Activated CD8-positive, alpha-beta T cell treated with anti-CD3 and anti-CD28 coated beads for 36 hours (primary cell): ENCODE measurements at regions of chrX and their contacts with region 1.

Region 1: DNA sequence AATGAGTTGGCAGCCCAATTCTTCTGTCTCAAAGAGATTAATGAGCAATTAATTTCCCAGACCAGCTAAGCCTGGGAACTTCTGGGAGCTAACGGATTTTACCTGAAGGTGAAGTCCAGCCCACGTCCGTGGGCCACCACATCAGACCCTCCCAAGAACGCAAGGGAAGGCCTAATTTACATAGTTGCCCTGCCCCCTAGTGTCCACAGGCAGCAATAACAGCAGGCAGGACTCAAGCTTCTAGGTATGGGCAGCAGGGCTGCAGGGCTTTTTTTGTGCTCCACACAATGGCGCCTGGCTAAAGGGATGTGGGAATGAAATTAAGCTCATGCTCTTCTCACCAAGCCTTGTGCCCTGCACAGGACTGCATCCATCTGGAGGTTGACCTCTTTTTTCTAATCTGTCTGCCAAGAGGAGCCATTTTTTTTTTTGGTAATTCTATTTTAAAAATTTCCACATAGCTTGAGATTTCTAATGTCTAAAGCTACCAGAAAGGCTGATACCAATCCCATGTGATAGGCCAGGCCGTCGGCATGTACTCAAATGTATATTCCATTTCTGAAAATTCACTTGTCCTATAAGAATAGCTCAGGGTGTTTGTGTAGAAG is 111.9 kb upstream of the TMEM164 start:
- DNase-seq: peak; percentile 59
- ATAC-seq: peak; percentile 74
- H3K4me3 Mint-ChIP-seq: no peak overlapping the region
- H3K27ac Mint-ChIP-seq: no peak overlapping the region
- H3K4me1 Mint-ChIP-seq: no peaks in the 10 kb centered on the region
- H3K27me3 Mint-ChIP-seq: no peaks in the 10 kb centered on the region
- CTCF ChIP-seq: peak; percentile 73

Region 2: DNA sequence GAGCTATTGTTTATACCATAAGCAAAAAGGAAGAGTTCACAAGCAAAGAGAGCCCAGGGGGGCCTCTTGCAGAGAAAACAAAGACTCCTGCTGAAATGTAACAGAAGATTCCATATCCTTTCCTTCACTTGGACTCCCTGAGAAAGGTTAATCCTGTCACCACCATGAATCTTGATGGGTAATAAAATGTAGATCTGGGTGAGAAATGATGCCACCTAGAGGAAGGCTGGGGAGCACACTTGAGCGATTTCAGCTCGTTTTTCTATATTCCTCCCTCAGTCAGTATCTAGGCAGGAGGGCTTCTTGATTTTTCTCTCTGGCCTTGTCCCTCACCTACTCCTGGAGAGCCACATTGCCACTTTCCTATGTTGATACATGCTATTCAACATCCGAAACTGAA is 255.8 kb before region 1 on chrX:
- CTCF ChIA-PET with region 1: interaction called, 12 read pairs
- POLR2A ChIA-PET with region 1: no interaction called
- intact Hi-C with region 1: no loop called
- DNase-seq: peak; percentile 4
- ATAC-seq: peak; percentile 20
- H3K4me3 Mint-ChIP-seq: no peak overlapping the region
- H3K27ac Mint-ChIP-seq: no peak overlapping the region
- H3K4me1 Mint-ChIP-seq: peaks cover 2% of the 10 kb centered on the region
- H3K27me3 Mint-ChIP-seq: no peaks in the 10 kb centered on the region
- CTCF ChIP-seq: peak; percentile 32

Region 3: GRCh38 chrX:109856974-109857373 is 34.0 kb before region 1 on chrX:
- CTCF ChIA-PET with region 1: interaction called, 11 read pairs
- POLR2A ChIA-PET with region 1: no interaction called
- intact Hi-C with region 1: no loop called
- DNase-seq: peak; percentile 9
- ATAC-seq: no peak
- H3K4me3 Mint-ChIP-seq: no peak overlapping the region
- H3K27ac Mint-ChIP-seq: no peak overlapping the region
- H3K4me1 Mint-ChIP-seq: peaks cover 4% of the 10 kb centered on the region
- H3K27me3 Mint-ChIP-seq: no peaks in the 10 kb centered on the region
- CTCF ChIP-seq: peak; percentile 73

Region 4: DNA sequence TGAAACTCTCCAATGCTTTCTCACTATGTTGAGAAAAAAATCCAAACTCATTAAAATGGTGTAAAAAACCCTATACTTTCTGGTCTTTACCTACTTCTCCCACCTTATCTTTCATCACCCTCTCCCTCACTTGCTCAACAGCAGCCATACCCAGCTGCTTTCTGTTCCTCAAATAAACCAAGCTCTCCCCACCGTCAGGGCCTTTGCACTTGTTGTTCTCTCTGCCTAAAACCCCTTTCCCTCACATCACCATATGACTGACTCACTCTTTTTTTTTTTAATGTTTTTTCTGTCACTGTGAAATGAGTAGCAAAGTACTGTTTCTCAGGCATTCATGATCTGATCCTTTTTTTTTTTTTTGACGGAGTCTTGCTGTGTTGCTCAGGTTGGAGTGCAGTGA is 10.4 kb before region 1 on chrX:
- CTCF ChIA-PET with region 1: interaction called, 30 read pairs
- POLR2A ChIA-PET with region 1: no interaction called
- intact Hi-C with region 1: no loop called
- DNase-seq: no peak
- ATAC-seq: no peak
- H3K4me3 Mint-ChIP-seq: no peak overlapping the region
- H3K27ac Mint-ChIP-seq: no peak overlapping the region
- H3K4me1 Mint-ChIP-seq: no peaks in the 10 kb centered on the region
- H3K27me3 Mint-ChIP-seq: no peaks in the 10 kb centered on the region
- CTCF ChIP-seq: no peak

Region 5: GRCh38 chrX:110081320-110081719 is 190.3 kb after region 1 on chrX:
- CTCF ChIA-PET with region 1: no interaction called
- POLR2A ChIA-PET with region 1: no interaction called
- intact Hi-C with region 1: no loop called
- DNase-seq: no peak
- ATAC-seq: no peak
- H3K4me3 Mint-ChIP-seq: no peak overlapping the region
- H3K27ac Mint-ChIP-seq: no peak overlapping the region
- H3K4me1 Mint-ChIP-seq: peaks cover 6% of the 10 kb centered on the region
- H3K27me3 Mint-ChIP-seq: no peaks in the 10 kb centered on the region
- CTCF ChIP-seq: no peak

Region 6: GRCh38 chrX:110146521-110146920 is 255.5 kb after region 1 on chrX:
- CTCF ChIA-PET with region 1: interaction called, 10 read pairs
- POLR2A ChIA-PET with region 1: no interaction called
- intact Hi-C with region 1: no loop called
- DNase-seq: peak; percentile 23
- ATAC-seq: peak; percentile 76
- H3K4me3 Mint-ChIP-seq: no peak overlapping the region
- H3K27ac Mint-ChIP-seq: no peak overlapping the region
- H3K4me1 Mint-ChIP-seq: peaks cover 3% of the 10 kb centered on the region
- H3K27me3 Mint-ChIP-seq: no peaks in the 10 kb centered on the region
- CTCF ChIP-seq: no peak